ENCODE measurements at regions of chrX and their contacts with region 1.

Region 1: DNA sequence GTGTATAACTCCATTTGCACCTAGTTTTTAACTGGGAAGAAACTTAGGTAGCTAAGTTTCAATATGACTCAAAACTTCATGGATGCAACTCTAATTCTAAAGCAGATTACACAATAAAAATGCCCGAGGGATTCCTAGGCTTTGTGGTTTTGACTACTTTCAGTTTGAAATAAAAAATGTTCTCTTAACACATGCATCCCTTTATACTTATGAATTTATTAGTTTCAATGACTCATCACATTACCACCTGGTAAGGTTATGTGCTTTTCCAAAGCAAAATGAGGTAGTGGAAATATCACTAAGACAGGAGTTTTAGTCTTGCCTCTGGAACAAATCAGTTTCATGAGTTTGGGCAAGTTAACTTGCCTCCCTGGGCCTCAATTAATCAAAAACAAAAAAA is 125.5 kb downstream of the OPHN1 start:
- DNase-seq: no peak
- ATAC-seq: no peak
- H3K4me3 ChIP-seq: no peak overlapping the region
- H3K27ac ChIP-seq: no peak overlapping the region
- H3K4me1 ChIP-seq: no peaks in the 10 kb centered on the region
- H3K27me3 ChIP-seq: peaks cover 0 to 4% (median 0%) of the 10 kb centered on the region in 7 donors
- CTCF ChIP-seq: no peak

Region 2: GRCh38 chrX:68254738-68255645 is 52.8 kb before region 1 on chrX:
- intact Hi-C with region 1: loop called in 1 of 10 experiments (anchors 2 kb)
- DNase-seq: no peak
- ATAC-seq: no peak
- H3K4me3 ChIP-seq: no peak overlapping the region
- H3K27ac ChIP-seq: no peak overlapping the region
- H3K4me1 ChIP-seq: peaks cover 0 to 7% (median 3%) of the 10 kb centered on the region in 9 donors
- H3K27me3 ChIP-seq: peaks cover 0 to 20% (median 0%) of the 10 kb centered on the region in 7 donors
- CTCF ChIP-seq: no peak

Region 3: DNA sequence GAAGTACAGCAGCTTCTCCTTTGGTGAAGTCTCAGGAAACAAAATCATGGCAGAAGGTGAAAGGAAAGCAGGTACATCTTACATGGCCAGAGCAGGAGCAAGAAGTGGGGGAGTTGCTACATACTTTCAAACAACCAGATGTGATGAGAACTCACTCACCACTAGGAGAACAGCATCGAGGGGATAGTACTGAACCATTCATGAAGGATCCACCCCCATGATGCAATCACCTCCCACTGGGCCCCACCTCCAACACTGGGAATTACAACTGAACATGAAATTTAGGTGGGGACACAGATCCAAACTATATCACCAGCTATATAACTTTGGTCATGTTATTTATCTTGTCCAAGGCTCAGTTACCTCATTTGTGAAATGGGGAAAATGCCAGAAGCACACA is 33.9 kb before region 1 on chrX:
- intact Hi-C with region 1: no loop called
- DNase-seq: no peak
- ATAC-seq: no peak
- H3K4me3 ChIP-seq: no peak overlapping the region
- H3K27ac ChIP-seq: no peak overlapping the region
- H3K4me1 ChIP-seq: no peaks in the 10 kb centered on the region
- H3K27me3 ChIP-seq: no peaks in the 10 kb centered on the region
- CTCF ChIP-seq: no peak

Region 4: DNA sequence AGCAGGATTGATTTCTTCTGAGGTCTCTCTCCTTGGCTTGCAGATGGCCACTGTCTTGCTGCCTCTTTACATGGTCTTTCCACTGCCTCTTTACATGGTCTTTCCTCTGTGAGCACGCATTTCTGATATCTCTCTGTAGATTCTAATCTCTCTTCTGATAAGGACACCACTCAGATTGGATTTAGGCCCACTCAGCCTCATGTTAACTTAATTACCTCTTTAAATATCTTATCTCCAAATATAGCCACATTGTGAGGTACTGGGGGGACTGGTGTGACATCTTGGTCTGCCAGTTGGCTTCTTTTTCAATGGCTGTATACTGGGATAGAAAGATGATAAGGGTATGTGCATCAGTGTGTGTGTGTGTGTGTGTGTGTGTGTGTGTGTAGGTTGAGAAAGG is 1588.3 kb after region 1 on chrX:
- intact Hi-C with region 1: no loop called
- DNase-seq: no peak
- ATAC-seq: no peak
- H3K4me3 ChIP-seq: no peak overlapping the region
- H3K27ac ChIP-seq: no peak overlapping the region
- H3K4me1 ChIP-seq: no peaks in the 10 kb centered on the region
- H3K27me3 ChIP-seq: no peaks in the 10 kb centered on the region
- CTCF ChIP-seq: no peak